Activated B cell treated with CpG ODN at 0.5 μM for 24 hours (primary cell): ENCODE measurements at regions of chr14 and their contacts with region 1.

Region 1: GRCh38 chr14:49828640-49829039 is 23.9 kb downstream of the NEMF start:
- DNase-seq: no peak
- ATAC-seq: no peak
- H3K4me3 Mint-ChIP-seq: no peak overlapping the region
- H3K27ac Mint-ChIP-seq: no peak overlapping the region
- H3K4me1 Mint-ChIP-seq: peaks cover 6% of the 10 kb centered on the region
- H3K27me3 Mint-ChIP-seq: no peaks in the 10 kb centered on the region
- CTCF ChIP-seq: no peak

Region 2: GRCh38 chr14:49461529-49462401 is 366.9 kb before region 1 on chr14:
- CTCF ChIA-PET with region 1: interaction called, 24 read pairs
- POLR2A ChIA-PET with region 1: no interaction called
- intact Hi-C with region 1: loop called (anchors 1 kb)
- DNase-seq: no peak
- ATAC-seq: peak; percentile 81
- H3K4me3 Mint-ChIP-seq: no peak overlapping the region
- H3K27ac Mint-ChIP-seq: no peak overlapping the region
- H3K4me1 Mint-ChIP-seq: no peaks in the 10 kb centered on the region
- H3K27me3 Mint-ChIP-seq: peaks cover 5% of the 10 kb centered on the region
- CTCF ChIP-seq: peak; percentile 62

Region 3: DNA sequence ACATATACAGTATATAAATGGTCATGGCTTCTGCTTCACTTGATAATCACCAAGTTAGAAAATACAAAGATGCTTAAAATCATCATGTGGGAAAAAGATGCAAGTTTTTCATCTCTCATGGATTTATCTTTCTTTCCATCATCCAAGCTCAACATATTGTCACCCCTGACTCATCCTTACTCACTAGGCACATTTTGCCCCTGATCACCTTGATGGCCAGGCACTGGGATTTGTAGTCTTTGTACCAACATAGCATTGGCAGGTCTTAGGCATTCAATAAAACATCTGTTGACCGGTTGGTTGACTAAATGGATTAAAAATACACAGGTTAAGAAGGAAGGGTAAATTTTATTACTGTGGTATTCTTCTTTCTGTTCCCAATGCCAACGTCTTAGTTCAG is 32.6 kb before region 1 on chr14:
- CTCF ChIA-PET with region 1: no interaction called
- POLR2A ChIA-PET with region 1: no interaction called
- intact Hi-C with region 1: loop called (anchors 5 kb)
- DNase-seq: no peak
- ATAC-seq: no peak
- H3K4me3 Mint-ChIP-seq: no peak overlapping the region
- H3K27ac Mint-ChIP-seq: no peak overlapping the region
- H3K4me1 Mint-ChIP-seq: no peaks in the 10 kb centered on the region
- H3K27me3 Mint-ChIP-seq: no peaks in the 10 kb centered on the region
- CTCF ChIP-seq: no peak

Region 4: GRCh38 chr14:49898485-49898884 is 69.8 kb after region 1 on chr14:
- CTCF ChIA-PET with region 1: no interaction called
- POLR2A ChIA-PET with region 1: interaction called, 10 read pairs
- intact Hi-C with region 1: no loop called
- DNase-seq: no peak
- ATAC-seq: no peak
- H3K4me3 Mint-ChIP-seq: peak overlapping the region; percentile 40
- H3K27ac Mint-ChIP-seq: peak overlapping the region; percentile 83
- H3K4me1 Mint-ChIP-seq: peaks cover 48% of the 10 kb centered on the region
- H3K27me3 Mint-ChIP-seq: no peaks in the 10 kb centered on the region
- CTCF ChIP-seq: no peak

Region 5: DNA sequence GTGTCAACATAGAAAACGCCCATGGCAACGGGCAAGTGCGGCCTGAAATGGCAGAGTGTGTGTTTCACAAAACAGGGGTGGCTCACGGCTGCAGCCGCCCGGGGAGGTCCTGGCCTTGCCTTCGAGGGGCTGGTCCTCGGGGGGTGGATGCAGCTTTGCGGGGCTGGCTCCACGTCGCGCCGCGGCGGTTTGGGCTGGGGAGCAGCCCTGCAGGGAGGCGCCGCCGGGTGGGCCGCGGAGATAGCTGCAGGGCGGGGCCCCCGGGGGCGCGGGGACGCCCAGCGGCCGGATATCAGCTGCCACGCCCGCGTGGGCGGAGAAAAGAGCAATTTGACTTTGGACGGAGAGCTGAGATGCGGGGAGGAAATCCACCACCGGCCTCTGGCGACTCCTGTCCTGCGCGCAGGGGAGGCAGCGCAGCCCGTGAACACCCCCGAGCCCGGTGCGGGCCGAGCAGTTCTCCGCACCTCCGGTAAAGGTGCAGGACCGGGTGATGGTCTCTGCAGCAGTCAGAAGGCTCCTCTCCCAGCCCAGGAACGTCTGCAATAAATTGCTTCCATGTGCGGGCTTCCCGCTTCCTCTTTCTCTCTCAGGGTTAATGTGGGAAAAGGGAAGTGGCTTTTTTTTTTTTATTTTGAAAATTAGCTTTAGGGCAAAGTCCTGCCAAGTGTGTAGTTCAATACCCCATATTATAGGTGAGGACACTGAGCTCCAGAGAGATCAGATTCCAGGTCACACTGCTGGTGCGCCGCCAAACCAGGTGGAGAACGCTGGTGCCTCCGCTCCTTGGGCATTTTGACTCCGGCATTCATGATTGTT is 174.8 kb after region 1 on chr14:
- CTCF ChIA-PET with region 1: no interaction called
- POLR2A ChIA-PET with region 1: no interaction called
- intact Hi-C with region 1: no loop called
- DNase-seq: peak; percentile 85
- ATAC-seq: peak; percentile 65
- H3K4me3 Mint-ChIP-seq: peak overlapping the region; percentile 83
- H3K27ac Mint-ChIP-seq: peak overlapping the region; percentile 95
- H3K4me1 Mint-ChIP-seq: peaks cover 79% of the 10 kb centered on the region
- H3K27me3 Mint-ChIP-seq: no peaks in the 10 kb centered on the region
- CTCF ChIP-seq: no peak